PC-9 (cell line): ENCODE measurements at regions of chr3 and their contacts with region 1.

Region 1: GRCh38 chr3:122356415-122356814 is 26.6 kb downstream of the MIX23 start:
- DNase-seq: peak; percentile 49 to 55
- H3K4me3 ChIP-seq: no peak overlapping the region
- H3K27ac ChIP-seq: no peak overlapping the region
- H3K4me1 ChIP-seq: no peaks in the 10 kb centered on the region
- H3K27me3 ChIP-seq: no peaks in the 10 kb centered on the region
- CTCF ChIP-seq: peak; percentile 67

Region 2: DNA sequence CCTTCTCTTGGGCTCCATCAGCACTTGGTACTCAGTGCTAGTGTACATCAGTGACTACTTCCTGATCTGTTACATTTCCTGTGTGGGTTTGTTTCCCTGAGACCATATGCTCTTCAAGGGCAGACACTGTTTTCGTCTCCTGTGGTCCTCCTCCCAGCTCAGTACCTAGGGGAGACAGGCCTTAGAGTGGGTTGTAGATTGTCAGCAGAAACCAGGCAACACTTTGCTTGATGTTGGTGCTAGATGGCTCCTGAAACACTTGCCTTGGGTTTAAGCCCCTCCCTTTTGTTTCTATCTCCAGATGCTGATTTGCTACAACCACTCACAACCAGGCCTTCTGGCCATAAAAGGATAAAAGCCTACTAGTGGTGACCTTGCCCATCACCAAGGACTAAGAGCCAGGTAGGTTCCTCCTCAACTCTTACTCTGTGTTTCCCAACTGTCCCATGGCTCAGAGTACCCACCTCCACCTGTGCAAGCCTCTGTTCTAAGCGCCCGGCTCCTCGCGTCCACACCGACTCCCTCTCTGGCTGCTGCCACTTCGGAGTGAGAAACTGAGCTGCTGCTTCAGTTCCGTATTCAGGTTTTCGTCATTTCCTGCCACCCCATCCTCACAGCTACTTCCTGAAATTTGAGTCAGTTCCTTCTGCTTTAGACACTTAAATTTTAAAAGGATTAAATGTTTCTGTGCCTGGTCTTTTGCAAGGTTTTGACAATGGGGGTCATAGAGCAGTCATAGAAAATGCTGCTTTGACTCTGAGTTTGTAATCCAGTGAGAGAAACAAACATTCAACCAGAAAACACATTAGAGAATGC is 695.9 kb before region 1 on chr3 and contains the start of gene HCLS1:
- CTCF ChIA-PET with region 1: no interaction called
- POLR2A ChIA-PET with region 1: no interaction called
- intact Hi-C with region 1: loop called (anchors 5 kb)
- DNase-seq: no peak
- H3K4me3 ChIP-seq: no peak within 1 kb of the TSS
- H3K27ac ChIP-seq: no peak within 1 kb of the TSS
- H3K4me1 ChIP-seq: no peaks in the 10 kb centered on the region
- H3K27me3 ChIP-seq: no peaks in the 10 kb centered on the region
- CTCF ChIP-seq: no peak
- total RNA-seq, gene HCLS1: 2.2 and 2.6 TPM in 2 replicates

Region 3: GRCh38 chr3:122101646-122102045 is 254.8 kb before region 1 on chr3:
- CTCF ChIA-PET with region 1: no interaction called
- POLR2A ChIA-PET with region 1: no interaction called
- intact Hi-C with region 1: loop called (anchors 1 kb)
- DNase-seq: peak; percentile 7 to 53
- H3K4me3 ChIP-seq: no peak overlapping the region
- H3K27ac ChIP-seq: no peak overlapping the region
- H3K4me1 ChIP-seq: no peaks in the 10 kb centered on the region
- H3K27me3 ChIP-seq: no peaks in the 10 kb centered on the region
- CTCF ChIP-seq: peak; percentile 68

Region 4: DNA sequence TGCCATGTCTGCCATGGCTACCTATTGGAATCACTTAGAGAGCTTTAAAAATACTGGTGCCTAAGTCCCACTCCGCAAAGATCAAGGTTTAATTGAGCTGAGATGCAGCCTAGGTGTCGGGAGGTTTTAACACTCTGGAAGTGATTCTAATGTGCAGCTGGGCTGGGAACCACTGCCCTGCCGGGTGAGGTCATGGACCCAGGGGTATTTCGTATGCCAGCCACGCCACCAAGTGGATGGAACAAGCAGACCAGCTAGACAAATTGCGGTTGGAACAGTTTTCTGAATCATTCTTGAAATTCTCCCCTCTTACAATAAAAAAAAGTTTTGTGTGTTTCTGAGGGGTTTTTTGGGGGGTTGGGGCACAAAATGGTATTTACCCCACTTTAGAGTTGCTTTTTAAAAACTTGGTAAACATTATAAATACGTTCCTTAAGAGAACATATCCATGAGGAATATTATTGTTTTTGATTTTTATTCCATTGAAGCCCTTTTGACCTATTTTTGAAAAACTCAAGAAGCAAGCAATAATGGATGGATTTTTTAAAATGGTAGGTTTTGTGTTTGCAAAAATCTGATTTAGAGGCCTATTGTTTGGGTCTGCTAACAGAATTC is 97.6 kb before region 1 on chr3:
- CTCF ChIA-PET with region 1: no interaction called
- POLR2A ChIA-PET with region 1: no interaction called
- intact Hi-C with region 1: loop called (anchors 2 kb)
- DNase-seq: peak; percentile 37 to 57
- H3K4me3 ChIP-seq: no peak overlapping the region
- H3K27ac ChIP-seq: no peak overlapping the region
- H3K4me1 ChIP-seq: no peaks in the 10 kb centered on the region
- H3K27me3 ChIP-seq: peaks cover 38% of the 10 kb centered on the region
- CTCF ChIP-seq: peak; percentile 65

Region 5: GRCh38 chr3:122305818-122306621 is 50.4 kb before region 1 on chr3:
- CTCF ChIA-PET with region 1: interaction called, 3 read pairs
- POLR2A ChIA-PET with region 1: interaction called, 3 read pairs
- intact Hi-C with region 1: loop called (anchors 1 kb)
- DNase-seq: peak; percentile 24 to 41
- H3K4me3 ChIP-seq: no peak overlapping the region
- H3K27ac ChIP-seq: no peak overlapping the region
- H3K4me1 ChIP-seq: peaks cover 16% of the 10 kb centered on the region
- H3K27me3 ChIP-seq: no peaks in the 10 kb centered on the region
- CTCF ChIP-seq: peak; percentile 53

Region 6: GRCh38 chr3:122392868-122393844 is 36.7 kb after region 1 on chr3:
- CTCF ChIA-PET with region 1: no interaction called
- POLR2A ChIA-PET with region 1: no interaction called
- intact Hi-C with region 1: no loop called
- DNase-seq: peak in 1 of 2 experiments; percentile 9
- H3K4me3 ChIP-seq: no peak overlapping the region
- H3K27ac ChIP-seq: no peak overlapping the region
- H3K4me1 ChIP-seq: no peaks in the 10 kb centered on the region
- H3K27me3 ChIP-seq: no peaks in the 10 kb centered on the region
- CTCF ChIP-seq: peak; percentile 91